ENCODE measurements at regions of chr1 and their contacts with region 1.

Region 1: GRCh38 chr1:225777583-225778336 is at the start of gene SRP9:
- DNase-seq: peak; percentile 99
- ATAC-seq: peak; percentile 99
- H3K4me3 Mint-ChIP-seq: no peak within 1 kb of the TSS
- H3K27ac Mint-ChIP-seq: no peak within 1 kb of the TSS
- H3K4me1 Mint-ChIP-seq: peaks cover 27% of the 10 kb centered on the region
- H3K27me3 Mint-ChIP-seq: no peaks in the 10 kb centered on the region
- total RNA-seq, gene SRP9: 240 to 247 TPM

Region 2: GRCh38 chr1:225428068-225428880 is 349.5 kb before region 1 on chr1:
- CTCF ChIA-PET with region 1: interaction called, 3 read pairs
- POLR2A ChIA-PET with region 1: interaction called, 13 read pairs
- DNase-seq: peak; percentile 94
- ATAC-seq: peak; percentile 92
- H3K4me3 Mint-ChIP-seq: peak overlapping the region; percentile 90
- H3K27ac Mint-ChIP-seq: peak overlapping the region; percentile 95
- H3K4me1 Mint-ChIP-seq: peaks cover 48% of the 10 kb centered on the region
- H3K27me3 Mint-ChIP-seq: no peaks in the 10 kb centered on the region

Region 3: DNA sequence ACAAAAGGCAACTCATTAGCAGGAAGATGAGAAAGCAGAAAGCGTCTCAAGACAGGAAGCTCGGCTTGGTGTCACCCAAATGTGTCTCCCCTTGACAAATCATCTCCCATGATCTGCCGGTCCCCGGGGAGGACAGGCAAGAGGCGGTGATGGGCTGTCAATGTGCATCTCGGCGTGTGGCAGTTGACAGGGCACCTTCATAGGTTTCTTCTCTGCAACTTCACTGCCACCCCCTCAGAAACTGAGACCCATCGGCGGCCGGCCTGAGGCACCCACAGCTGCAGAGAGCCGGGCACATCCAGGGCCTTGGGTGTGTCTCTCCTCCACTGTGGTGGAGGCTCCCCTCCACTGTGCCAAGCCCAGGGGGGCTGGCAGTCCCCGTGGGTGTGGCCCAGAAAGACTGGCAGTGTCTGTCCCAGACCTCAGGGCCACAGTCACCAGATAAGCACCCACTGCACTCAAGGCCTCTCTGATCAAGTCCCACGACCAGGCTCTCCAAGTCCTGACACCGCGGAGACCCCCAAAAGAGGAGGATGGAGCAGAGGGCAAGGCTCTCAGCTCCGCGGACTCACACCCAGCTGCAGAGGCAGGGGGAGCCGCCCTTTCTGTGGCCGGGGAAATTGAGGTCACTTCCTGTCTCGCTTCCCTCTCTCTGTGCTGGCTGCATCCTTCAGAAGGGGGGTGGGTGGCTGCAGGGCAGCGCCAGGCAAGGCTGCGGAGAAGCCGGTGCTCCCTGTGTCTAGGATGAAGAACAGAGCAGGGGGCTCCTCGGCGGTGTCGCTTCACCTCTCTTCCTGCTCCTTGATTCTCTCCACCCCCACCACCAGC is 310.4 kb before region 1 on chr1:
- CTCF ChIA-PET with region 1: interaction called, 6 read pairs
- POLR2A ChIA-PET with region 1: interaction called, 22 read pairs
- DNase-seq: peak; percentile 93
- ATAC-seq: peak; percentile 90
- H3K4me3 Mint-ChIP-seq: peak overlapping the region; percentile 91
- H3K27ac Mint-ChIP-seq: peak overlapping the region; percentile 97
- H3K4me1 Mint-ChIP-seq: peaks cover 58% of the 10 kb centered on the region
- H3K27me3 Mint-ChIP-seq: no peaks in the 10 kb centered on the region

Region 4: GRCh38 chr1:225809842-225810578 is 32.2 kb after region 1 on chr1 and contains the start of gene EPHX1:
- CTCF ChIA-PET with region 1: interaction called, 13 read pairs
- POLR2A ChIA-PET with region 1: interaction called, 12 read pairs
- DNase-seq: peak; percentile 74
- ATAC-seq: peak; percentile 97
- H3K4me3 Mint-ChIP-seq: peak within 1 kb of the TSS; percentile 76
- H3K27ac Mint-ChIP-seq: no peak within 1 kb of the TSS
- H3K4me1 Mint-ChIP-seq: peaks cover 16% of the 10 kb centered on the region
- H3K27me3 Mint-ChIP-seq: peaks cover 11% of the 10 kb centered on the region
- total RNA-seq, gene EPHX1: 1.5 to 2.0 TPM

Region 5: GRCh38 chr1:225896937-225897549 is 119.3 kb after region 1 on chr1:
- CTCF ChIA-PET with region 1: interaction called, 4 read pairs
- POLR2A ChIA-PET with region 1: interaction called, 12 read pairs
- DNase-seq: peak; percentile 89
- ATAC-seq: peak; percentile 98
- H3K4me3 Mint-ChIP-seq: peak overlapping the region; percentile 56
- H3K27ac Mint-ChIP-seq: peak overlapping the region; percentile 80
- H3K4me1 Mint-ChIP-seq: peaks cover 42% of the 10 kb centered on the region
- H3K27me3 Mint-ChIP-seq: peaks cover 12% of the 10 kb centered on the region

Region 6: DNA sequence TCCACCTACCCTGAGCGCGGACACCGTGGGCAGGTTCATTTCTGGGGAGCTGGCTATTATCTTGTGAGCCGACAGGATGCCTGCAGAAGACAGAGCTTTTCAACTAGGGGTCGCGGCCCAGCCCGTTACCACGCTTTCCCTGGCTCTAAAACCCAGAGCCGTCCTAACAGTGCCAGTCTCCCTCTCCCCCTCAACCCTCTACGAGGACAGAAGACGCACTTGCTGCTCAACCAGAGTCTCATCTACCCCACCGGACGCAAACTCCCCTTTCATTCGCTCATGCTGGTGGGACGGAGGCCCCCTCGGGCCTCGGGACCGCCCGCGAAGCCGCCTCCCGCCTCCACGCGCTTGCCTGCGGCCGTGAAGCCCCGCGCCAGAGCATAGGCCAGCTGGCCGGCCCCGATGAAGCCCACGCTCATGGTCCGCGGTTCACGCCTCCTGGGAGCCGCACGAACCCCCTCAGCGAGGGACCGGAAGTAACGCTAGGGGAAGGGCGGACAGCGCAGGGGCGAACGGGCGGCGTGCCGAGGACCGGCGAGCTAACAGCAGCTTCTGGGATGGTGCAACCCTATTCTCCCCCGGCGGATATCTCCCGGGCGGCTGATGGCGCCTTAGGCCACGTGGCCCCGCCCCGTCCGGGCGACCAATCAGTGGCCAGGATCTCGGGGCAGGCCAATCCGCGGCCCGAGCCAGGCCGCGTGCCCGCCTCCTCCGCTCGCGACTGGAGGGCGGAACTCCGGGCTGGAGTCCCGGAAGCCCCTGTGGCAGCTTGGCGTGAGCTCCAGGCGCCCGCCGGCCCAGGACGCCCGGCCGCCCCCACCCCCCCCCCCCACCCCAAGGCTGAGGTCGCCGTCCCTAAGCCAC is 146.2 kb after region 1 on chr1 and contains the start of gene PYCR2:
- CTCF ChIA-PET with region 1: interaction called, 10 read pairs
- POLR2A ChIA-PET with region 1: interaction called, 17 read pairs
- DNase-seq: peak; percentile 96
- ATAC-seq: peak; percentile 98
- H3K4me3 Mint-ChIP-seq: peak within 1 kb of the TSS; percentile 97
- H3K27ac Mint-ChIP-seq: peak within 1 kb of the TSS; percentile 97
- H3K4me1 Mint-ChIP-seq: peaks cover 65% of the 10 kb centered on the region
- H3K27me3 Mint-ChIP-seq: no peaks in the 10 kb centered on the region
- total RNA-seq, gene PYCR2: 122 to 126 TPM